Sigmoid colon (tissue), 7 donors: ENCODE measurements at regions of chr9 and their contacts with region 1.

Region 1: DNA sequence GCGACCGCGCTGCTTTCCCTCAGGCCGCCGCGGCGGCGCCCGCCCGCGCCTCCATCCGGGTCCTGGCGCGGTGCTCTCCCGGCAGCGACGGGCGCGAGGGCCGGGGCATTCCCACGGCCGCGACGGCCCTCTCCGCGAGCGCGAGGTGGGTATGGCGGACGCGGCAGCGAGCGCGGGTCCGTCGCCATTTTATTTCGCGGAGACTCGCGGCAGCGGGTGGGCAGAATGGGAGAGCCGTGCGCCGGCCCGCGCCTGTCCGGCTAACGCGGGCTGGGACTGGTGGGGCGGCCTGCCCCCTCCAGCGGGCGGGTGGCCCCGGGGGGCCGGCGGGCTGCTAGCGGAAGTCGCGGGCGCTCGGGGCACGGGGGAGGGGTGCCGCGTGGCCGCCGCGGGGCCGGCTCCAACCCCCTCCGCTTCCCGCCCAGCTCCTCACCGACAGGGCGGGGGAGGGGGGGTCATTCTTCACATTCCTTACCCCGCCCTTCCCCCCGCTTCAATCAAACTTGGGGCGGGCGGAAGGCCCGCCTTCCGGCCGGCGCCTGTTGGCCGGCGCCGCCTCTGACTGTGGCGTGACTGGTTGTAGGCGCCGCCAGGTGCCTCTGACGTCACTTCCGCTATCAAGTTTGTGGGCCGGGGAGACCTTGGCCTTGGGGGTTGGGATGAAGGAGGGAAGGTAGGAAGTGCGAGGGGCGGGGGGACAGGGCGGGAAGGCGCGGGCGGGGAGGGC is 82.1 kb downstream of the PTPDC1 start:
- DNase-seq: peak; percentile 99
- H3K4me3 ChIP-seq: peak overlapping the region; percentile 84 to 100 (median 92)
- H3K27ac ChIP-seq: peak overlapping the region; percentile 100
- H3K4me1 ChIP-seq: peaks cover 0 to 42% (median 40%) of the 10 kb centered on the region in 4 donors
- H3K27me3 ChIP-seq: no peaks in the 10 kb centered on the region
- CTCF ChIP-seq: peak in 1 of 4 experiments; percentile 17
- EP300 ChIP-seq: peak in 3 of 4 donors; percentile 51 to 82 (median 64)
- POLR2A ChIP-seq: peak; percentile 57 to 68

Region 2: GRCh38 chr9:94086486-94087345 is 79.7 kb before region 1 on chr9:
- intact Hi-C with region 1: no loop called
- DNase-seq: no peak
- H3K4me3 ChIP-seq: no peak overlapping the region
- H3K27ac ChIP-seq: peak overlapping the region in 2 of 4 donors; percentile 1 to 38
- H3K4me1 ChIP-seq: peaks cover 0 to 36% (median 15%) of the 10 kb centered on the region in 4 donors
- H3K27me3 ChIP-seq: no peaks in the 10 kb centered on the region
- CTCF ChIP-seq: no peak
- EP300 ChIP-seq: no peak
- POLR2A ChIP-seq: no peak

Region 3: DNA sequence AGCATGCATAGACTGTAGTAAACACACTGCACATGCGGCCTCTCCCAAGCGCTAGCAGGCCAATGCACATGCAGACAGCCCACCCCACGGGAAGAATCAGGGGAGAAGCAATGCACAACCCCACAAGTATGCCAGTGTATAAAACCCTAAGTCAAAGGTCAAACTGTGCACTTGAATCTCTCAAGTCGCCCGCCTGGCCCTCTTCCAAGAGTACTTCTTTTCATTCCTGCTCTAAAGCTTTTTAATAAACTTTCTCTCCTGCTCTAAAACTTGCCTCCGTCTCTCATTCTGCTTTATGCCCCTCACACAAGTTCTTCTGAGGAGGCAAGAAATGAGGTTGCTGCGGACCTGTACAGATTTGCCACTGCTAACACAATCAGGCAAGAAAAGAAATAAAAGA is 31.8 kb before region 1 on chr9:
- intact Hi-C with region 1: loop called (anchors 5 kb)
- DNase-seq: no peak
- H3K4me3 ChIP-seq: peak overlapping the region in 1 of 4 donors; percentile 0
- H3K27ac ChIP-seq: peak overlapping the region; percentile 73 to 90 (median 88)
- H3K4me1 ChIP-seq: peaks cover 0 to 44% (median 39%) of the 10 kb centered on the region in 4 donors
- H3K27me3 ChIP-seq: no peaks in the 10 kb centered on the region
- CTCF ChIP-seq: no peak
- EP300 ChIP-seq: no peak
- POLR2A ChIP-seq: no peak

Region 4: DNA sequence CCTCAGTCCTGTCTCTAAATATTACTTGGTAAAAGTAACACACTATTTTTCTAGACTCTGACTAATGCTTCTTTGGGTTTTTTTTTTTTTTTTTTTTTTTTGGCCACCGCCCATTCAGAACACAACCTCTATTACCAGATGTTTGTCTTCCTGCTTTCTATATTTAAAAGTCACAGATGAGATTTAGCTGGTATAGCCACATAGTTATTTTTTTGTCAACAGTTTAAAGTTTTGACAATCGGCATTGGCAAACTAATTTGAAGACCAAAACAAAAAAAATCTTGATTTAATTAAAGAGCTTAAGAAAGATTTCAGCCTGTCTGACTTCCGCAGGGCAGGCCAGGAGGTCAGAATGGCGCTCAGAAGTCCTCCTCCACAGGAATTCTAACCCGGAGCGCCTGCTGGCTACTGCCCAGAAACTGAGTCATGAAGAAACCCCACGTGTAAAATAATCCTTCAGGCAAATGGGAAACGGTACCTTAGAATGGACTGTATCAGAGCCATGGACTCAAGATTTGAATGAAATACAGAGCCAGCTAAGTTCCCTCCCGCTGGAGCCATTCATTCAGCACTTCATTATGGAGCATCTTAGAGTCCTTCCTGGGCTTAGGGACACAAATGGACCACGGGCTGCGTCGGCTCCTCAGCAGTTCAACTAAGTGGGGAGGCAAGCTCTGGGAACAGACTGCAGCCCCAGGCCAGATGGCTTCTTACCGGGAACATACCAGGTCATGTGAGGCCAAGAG is 26.6 kb before region 1 on chr9:
- intact Hi-C with region 1: loop called (anchors 2 kb)
- DNase-seq: peak; percentile 96
- H3K4me3 ChIP-seq: no peak overlapping the region
- H3K27ac ChIP-seq: peak overlapping the region; percentile 83 to 90 (median 88)
- H3K4me1 ChIP-seq: peaks cover 0 to 70% (median 65%) of the 10 kb centered on the region in 4 donors
- H3K27me3 ChIP-seq: no peaks in the 10 kb centered on the region
- CTCF ChIP-seq: no peak
- EP300 ChIP-seq: peak in 2 of 4 donors; percentile 32 to 44
- POLR2A ChIP-seq: no peak